CD14-positive monocyte (primary cell): ENCODE measurements at regions of chr7 and their contacts with region 1.

Region 1: DNA sequence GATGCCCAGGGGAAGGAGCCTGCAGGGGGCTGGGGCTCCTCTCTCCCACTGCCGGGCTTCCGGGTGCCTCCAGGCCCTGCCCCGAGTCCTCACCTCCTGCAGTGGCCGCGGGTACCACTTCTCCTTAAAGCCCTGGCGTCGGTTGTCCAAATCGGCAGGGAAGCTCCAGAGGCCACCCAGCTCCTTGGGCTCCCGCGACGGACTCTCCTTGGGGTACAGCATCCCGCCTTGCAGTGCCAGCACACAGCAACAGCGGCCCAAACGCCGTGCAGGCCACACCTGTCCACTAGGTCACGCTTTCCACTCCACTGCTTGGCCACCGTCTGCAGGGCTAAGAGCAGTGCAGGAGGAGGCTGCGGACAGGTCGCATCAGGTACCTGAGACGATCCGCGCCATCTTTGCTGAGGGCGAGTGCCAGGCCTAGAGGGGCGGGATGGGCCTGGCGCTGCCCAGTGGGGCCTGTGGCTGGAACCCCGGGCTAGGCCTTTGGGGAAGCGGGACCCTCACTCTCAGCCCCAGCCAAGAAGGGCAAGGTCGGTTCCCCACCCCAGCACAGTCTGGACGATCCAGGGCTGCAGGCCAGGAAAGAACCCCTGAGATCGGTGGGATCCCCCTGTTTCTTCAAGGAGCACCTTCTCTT is 47.7 kb upstream of the ZNF479 start:
- DNase-seq: no peak
- H3K4me3 ChIP-seq: no peak overlapping the region
- H3K4me3 Mint-ChIP-seq: no peak overlapping the region
- H3K27ac ChIP-seq: no peak overlapping the region
- H3K27ac Mint-ChIP-seq: no peak overlapping the region
- H3K4me1 ChIP-seq: no peaks in the 10 kb centered on the region
- H3K4me1 Mint-ChIP-seq: no peaks in the 10 kb centered on the region
- H3K27me3 ChIP-seq: no peaks in the 10 kb centered on the region
- H3K27me3 Mint-ChIP-seq: peaks cover 0 to 2% (median 1%) of the 10 kb centered on the region in 3 donors
- CTCF ChIP-seq: no peak

Region 2: DNA sequence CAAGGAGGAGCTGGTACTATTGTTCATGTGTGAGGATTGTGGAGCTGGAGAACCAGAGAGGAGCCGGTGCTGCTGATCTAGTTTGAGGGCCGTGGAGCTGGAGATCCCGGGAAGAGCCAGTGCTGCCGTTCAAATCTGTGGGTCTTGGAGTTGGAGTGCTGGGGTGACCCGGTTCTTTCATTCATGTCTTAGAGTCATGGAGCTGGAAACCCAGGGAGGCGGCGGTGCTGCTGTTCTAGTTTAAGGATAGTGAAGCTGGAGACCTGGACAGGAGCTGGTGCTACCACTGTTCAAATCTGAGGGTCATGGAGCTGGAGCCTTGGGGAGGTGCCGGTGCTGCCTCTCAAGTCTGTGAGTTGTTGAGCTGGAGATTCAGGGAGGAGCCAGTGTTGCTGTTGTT is 40.9 kb after region 1 on chr7:
- intact Hi-C with region 1: loop called in 1 of 2 experiments (anchors 10 kb)
- DNase-seq: no peak
- H3K4me3 ChIP-seq: no peak overlapping the region
- H3K4me3 Mint-ChIP-seq: no peak overlapping the region
- H3K27ac ChIP-seq: no peak overlapping the region
- H3K27ac Mint-ChIP-seq: no peak overlapping the region
- H3K4me1 ChIP-seq: no peaks in the 10 kb centered on the region
- H3K4me1 Mint-ChIP-seq: no peaks in the 10 kb centered on the region
- H3K27me3 ChIP-seq: no peaks in the 10 kb centered on the region
- H3K27me3 Mint-ChIP-seq: peaks cover 0 to 4% (median 0%) of the 10 kb centered on the region in 3 donors
- CTCF ChIP-seq: no peak